Calu3 (cell line): ENCODE measurements at regions of chr7 and their contacts with region 1.

Region 1: GRCh38 chr7:51315393-51316261 is 982 bp downstream of the COBL start:
- DNase-seq: peak; percentile 88
- H3K4me3 Mint-ChIP-seq: peak overlapping the region; percentile 93
- H3K27ac Mint-ChIP-seq: peak overlapping the region; percentile 95
- H3K4me1 Mint-ChIP-seq: peaks cover 50% of the 10 kb centered on the region
- H3K27me3 Mint-ChIP-seq: no peaks in the 10 kb centered on the region
- CTCF ChIP-seq: no peak

Region 2: DNA sequence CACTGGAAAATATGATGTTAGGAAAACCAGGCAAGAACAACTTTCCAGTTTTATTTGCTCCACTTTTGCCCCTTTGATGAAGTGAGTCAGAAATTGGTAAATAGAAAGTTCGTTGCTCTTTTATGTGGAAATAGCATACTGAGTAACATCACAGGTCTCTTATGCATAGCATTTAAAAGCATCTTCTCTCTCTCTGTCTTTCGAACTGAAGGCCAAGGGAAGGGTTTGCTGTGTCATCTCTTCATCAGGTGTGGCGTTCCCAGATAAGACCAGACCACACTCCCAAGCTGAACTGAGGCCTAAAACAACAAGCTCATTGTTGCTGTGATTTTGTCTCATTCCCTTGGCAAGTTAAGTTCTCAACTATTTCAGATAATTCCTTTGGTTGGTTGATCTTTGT is 401.2 kb before region 1 on chr7:
- CTCF ChIA-PET with region 1: no interaction called
- intact Hi-C with region 1: no loop called
- DNase-seq: no peak
- H3K4me3 Mint-ChIP-seq: no peak overlapping the region
- H3K27ac Mint-ChIP-seq: no peak overlapping the region
- H3K4me1 Mint-ChIP-seq: peaks cover 24% of the 10 kb centered on the region
- H3K27me3 Mint-ChIP-seq: no peaks in the 10 kb centered on the region
- CTCF ChIP-seq: no peak

Region 3: GRCh38 chr7:51255536-51256208 is 60.0 kb before region 1 on chr7:
- CTCF ChIA-PET with region 1: interaction called, 5 read pairs
- intact Hi-C with region 1: loop called (anchors 5 kb)
- DNase-seq: peak; percentile 67
- H3K4me3 Mint-ChIP-seq: peak overlapping the region; percentile 29
- H3K27ac Mint-ChIP-seq: peak overlapping the region; percentile 45
- H3K4me1 Mint-ChIP-seq: peaks cover 65% of the 10 kb centered on the region
- H3K27me3 Mint-ChIP-seq: no peaks in the 10 kb centered on the region
- CTCF ChIP-seq: no peak

Region 4: GRCh38 chr7:51263631-51264484 is 51.8 kb before region 1 on chr7:
- CTCF ChIA-PET with region 1: interaction called, 4 read pairs
- intact Hi-C with region 1: loop called (anchors 2 kb)
- DNase-seq: peak; percentile 88
- H3K4me3 Mint-ChIP-seq: peak overlapping the region; percentile 7
- H3K27ac Mint-ChIP-seq: peak overlapping the region; percentile 62
- H3K4me1 Mint-ChIP-seq: peaks cover 46% of the 10 kb centered on the region
- H3K27me3 Mint-ChIP-seq: no peaks in the 10 kb centered on the region
- CTCF ChIP-seq: no peak

Region 5: GRCh38 chr7:51299391-51300133 is 16.1 kb before region 1 on chr7:
- CTCF ChIA-PET with region 1: interaction called, 12 read pairs
- intact Hi-C with region 1: loop called (anchors 1 kb)
- DNase-seq: no peak
- H3K4me3 Mint-ChIP-seq: no peak overlapping the region
- H3K27ac Mint-ChIP-seq: no peak overlapping the region
- H3K4me1 Mint-ChIP-seq: peaks cover 26% of the 10 kb centered on the region
- H3K27me3 Mint-ChIP-seq: no peaks in the 10 kb centered on the region
- CTCF ChIP-seq: no peak

Region 6: DNA sequence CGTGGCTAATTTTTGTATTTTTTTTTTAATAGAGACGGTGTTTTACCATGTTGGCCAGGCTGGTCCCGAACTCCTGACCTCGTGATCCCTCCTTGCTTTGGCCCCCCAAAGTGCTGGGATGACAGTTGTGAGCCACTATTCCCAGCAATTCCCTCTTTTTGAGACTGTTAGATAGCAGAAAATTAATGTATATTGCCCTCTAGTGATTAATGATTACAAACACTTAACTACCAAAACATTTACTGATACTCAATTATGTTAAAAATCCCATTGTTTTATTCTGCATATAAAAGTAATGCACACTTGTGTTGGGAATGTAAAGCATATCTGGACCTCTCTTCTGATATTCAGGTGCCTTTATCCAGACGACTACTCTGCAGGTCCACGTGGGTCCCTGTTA is 42.2 kb after region 1 on chr7:
- CTCF ChIA-PET with region 1: interaction called, 7 read pairs
- intact Hi-C with region 1: loop called (anchors 2 kb)
- DNase-seq: no peak
- H3K4me3 Mint-ChIP-seq: no peak overlapping the region
- H3K27ac Mint-ChIP-seq: no peak overlapping the region
- H3K4me1 Mint-ChIP-seq: peaks cover 30% of the 10 kb centered on the region
- H3K27me3 Mint-ChIP-seq: peaks cover 12% of the 10 kb centered on the region
- CTCF ChIP-seq: peak; percentile 41